MCF 10A (cell line): ENCODE measurements at regions of chr5 and their contacts with region 1.

Region 1: DNA sequence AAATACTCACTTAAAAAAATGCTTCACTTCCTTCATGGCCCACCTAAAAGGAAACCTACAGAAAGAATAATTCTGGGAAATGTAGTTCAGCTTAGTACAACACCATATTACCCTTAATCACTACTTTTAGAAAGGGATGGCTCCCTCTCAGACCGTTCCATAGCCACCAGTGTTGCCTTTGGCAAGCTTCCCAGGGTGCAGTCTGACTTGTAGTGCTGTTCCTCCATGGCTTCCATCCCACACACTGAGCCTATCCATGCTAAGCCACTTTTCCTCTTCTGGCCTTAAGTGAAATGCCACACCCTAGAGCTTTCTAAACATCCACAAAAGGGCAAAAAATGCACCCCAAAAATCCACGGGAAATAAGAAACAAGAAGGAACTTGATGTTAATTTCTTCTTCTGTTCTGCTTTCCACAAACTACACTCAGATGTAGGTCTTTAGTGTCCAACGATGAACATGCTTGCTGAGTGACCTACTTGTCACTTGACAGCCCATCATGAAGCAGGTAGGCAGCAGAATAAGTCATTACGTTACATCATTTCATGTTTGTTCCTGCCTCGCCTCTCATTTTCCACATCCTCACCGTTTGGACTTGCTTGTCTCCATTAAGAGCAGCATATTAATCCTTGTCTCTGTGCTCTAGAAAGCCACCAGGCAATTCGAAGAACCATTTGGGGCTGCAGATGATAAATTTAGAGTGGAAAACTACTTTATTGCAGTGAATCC is 391.1 kb upstream of the GRAMD2B start:
- DNase-seq: peak; percentile 85
- H3K4me3 Mint-ChIP-seq: no peak overlapping the region
- H3K27ac Mint-ChIP-seq: no peak overlapping the region
- H3K4me1 Mint-ChIP-seq: peaks cover 11% of the 10 kb centered on the region
- H3K27me3 Mint-ChIP-seq: no peaks in the 10 kb centered on the region
- CTCF ChIP-seq: no peak

Region 2: DNA sequence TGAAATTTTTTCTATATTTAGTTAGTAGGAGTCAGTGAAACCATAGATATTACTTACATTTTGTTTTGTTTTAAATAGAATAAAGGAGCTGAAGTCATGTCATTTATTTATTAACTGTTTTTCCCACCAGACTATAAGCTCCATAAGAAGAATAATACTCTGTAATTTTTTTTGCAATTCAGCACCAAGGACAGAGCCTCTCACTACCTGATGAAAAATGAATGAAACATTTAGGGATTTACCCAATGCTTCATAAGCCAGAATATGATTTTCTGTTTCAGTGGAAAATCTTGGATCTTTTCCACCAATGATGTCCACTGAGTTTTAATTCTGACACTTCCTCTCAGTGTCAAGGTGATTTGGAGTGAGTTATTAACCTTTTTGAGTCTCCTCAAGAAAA is 233.8 kb before region 1 on chr5:
- CTCF ChIA-PET with region 1: no interaction called
- POLR2A ChIA-PET with region 1: no interaction called
- intact Hi-C with region 1: no loop called
- DNase-seq: peak; percentile 75
- H3K4me3 Mint-ChIP-seq: no peak overlapping the region
- H3K27ac Mint-ChIP-seq: no peak overlapping the region
- H3K4me1 Mint-ChIP-seq: peaks cover 4% of the 10 kb centered on the region
- H3K27me3 Mint-ChIP-seq: no peaks in the 10 kb centered on the region
- CTCF ChIP-seq: no peak

Region 3: GRCh38 chr5:126052120-126052519 is 20.0 kb after region 1 on chr5:
- CTCF ChIA-PET with region 1: no interaction called
- POLR2A ChIA-PET with region 1: no interaction called
- intact Hi-C with region 1: no loop called
- DNase-seq: peak; percentile 25
- H3K4me3 Mint-ChIP-seq: no peak overlapping the region
- H3K27ac Mint-ChIP-seq: no peak overlapping the region
- H3K4me1 Mint-ChIP-seq: peaks cover 13% of the 10 kb centered on the region
- H3K27me3 Mint-ChIP-seq: no peaks in the 10 kb centered on the region
- CTCF ChIP-seq: no peak

Region 4: GRCh38 chr5:126081209-126081608 is 49.1 kb after region 1 on chr5:
- CTCF ChIA-PET with region 1: no interaction called
- POLR2A ChIA-PET with region 1: no interaction called
- intact Hi-C with region 1: loop called (anchors 1 kb)
- DNase-seq: no peak
- H3K4me3 Mint-ChIP-seq: no peak overlapping the region
- H3K27ac Mint-ChIP-seq: no peak overlapping the region
- H3K4me1 Mint-ChIP-seq: no peaks in the 10 kb centered on the region
- H3K27me3 Mint-ChIP-seq: no peaks in the 10 kb centered on the region
- CTCF ChIP-seq: no peak

Region 5: DNA sequence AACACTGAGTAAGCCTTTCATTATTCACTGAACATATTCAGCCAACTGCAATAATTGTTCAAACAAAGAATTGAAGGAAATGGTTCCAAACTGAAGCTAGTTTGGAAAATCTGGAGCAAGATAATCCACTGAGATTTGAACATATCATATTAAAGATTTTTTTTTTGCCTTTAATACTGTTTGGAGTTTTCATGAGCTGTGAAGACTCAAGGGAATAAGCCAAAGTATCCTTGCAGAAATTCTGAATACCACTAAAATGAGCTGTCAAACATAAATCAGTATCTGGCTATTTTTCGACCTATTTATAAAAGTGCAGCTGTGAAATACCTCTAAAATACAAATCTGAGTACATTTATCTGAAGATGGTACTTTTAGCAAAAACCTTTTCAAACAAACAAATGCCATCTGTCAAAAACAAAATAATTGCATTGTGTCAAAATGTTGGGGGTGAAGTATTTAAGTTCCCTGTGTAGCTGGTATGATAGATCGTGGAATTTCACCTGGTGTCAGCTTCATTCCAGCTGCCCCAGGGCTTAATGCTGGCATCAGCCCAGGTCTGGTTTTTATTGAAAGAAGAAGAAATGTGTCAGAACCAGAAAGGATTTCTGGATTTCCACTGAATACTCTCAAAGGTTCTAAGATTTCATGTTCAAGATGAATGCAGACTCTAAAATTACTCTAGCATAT is 242.1 kb after region 1 on chr5:
- CTCF ChIA-PET with region 1: no interaction called
- POLR2A ChIA-PET with region 1: no interaction called
- intact Hi-C with region 1: no loop called
- DNase-seq: peak; percentile 42
- H3K4me3 Mint-ChIP-seq: no peak overlapping the region
- H3K27ac Mint-ChIP-seq: no peak overlapping the region
- H3K4me1 Mint-ChIP-seq: no peaks in the 10 kb centered on the region
- H3K27me3 Mint-ChIP-seq: no peaks in the 10 kb centered on the region
- CTCF ChIP-seq: no peak